Endothelial cell of umbilical vein (primary cell): ENCODE measurements at regions of chr5 and their contacts with region 1.

Region 1: DNA sequence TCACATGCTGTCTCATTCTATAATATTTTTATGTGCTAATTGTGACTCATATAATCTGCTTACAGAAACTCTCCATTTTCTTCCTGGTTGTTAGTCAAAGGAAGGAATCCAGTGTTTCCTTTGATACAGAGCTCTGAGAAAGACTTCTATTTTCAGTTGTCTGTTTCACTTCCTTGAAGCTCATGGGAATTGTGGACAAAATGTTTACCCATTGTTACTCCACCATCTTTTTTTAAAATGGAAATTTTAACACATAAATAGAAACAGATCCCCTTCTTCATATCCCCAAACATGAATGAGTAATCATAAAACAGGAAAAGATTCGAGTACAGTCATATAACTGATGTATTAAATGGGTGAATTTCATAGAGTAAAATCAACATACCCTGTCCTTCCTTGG is 42.0 kb upstream of the KCNN2 start:
- DNase-seq: peak; percentile 94
- H3K4me3 ChIP-seq: no peak overlapping the region
- H3K27ac ChIP-seq: peak overlapping the region; percentile 93
- H3K4me1 ChIP-seq: peaks cover 32% of the 10 kb centered on the region
- H3K27me3 ChIP-seq: no peaks in the 10 kb centered on the region
- CTCF ChIP-seq: no peak
- POLR2A ChIP-seq: no peak

Region 2: DNA sequence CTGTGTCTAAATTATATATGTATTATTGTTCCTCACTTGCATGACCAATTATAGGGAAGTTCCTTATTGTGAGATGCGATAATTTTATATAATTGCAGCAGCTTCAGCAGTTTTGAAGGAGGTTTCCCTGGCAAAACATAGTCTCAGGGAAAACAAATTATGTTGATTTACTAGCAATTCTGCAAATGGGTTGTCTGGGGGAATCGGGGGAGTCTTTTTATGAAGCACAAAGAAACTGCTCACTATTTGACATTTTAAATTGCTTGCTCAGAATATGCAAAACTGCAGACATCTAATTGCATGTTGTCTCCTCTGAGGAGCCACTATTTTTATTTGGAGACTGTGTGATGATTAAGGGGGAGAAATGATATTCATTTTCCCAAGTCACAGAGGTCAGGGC is 444.7 kb before region 1 on chr5:
- CTCF ChIA-PET with region 1: no interaction called
- POLR2A ChIA-PET with region 1: no interaction called
- dilution Hi-C with region 1: no loop called
- intact Hi-C with region 1: no loop called
- DNase-seq: no peak
- H3K4me3 ChIP-seq: no peak overlapping the region
- H3K27ac ChIP-seq: no peak overlapping the region
- H3K4me1 ChIP-seq: no peaks in the 10 kb centered on the region
- H3K27me3 ChIP-seq: no peaks in the 10 kb centered on the region
- CTCF ChIP-seq: no peak
- POLR2A ChIP-seq: no peak

Region 3: DNA sequence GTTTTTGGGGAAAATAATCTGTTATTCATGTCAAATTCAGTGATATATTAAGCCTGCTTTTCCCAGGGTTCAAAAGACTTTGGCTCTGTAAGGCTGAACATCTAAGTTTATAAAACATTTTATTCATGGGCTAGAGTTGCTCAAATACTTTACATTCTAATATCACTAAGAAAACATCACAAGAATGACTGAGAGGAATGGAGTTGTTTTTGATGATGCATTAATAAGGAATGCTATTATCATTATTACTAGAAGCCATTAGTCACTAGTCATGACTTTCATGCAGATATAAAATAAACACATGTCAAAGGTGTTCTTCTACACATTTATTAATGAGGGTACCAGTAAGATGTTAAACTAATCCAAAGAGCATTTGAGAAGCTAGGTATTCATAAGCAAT is 143.5 kb before region 1 on chr5:
- CTCF ChIA-PET with region 1: no interaction called
- POLR2A ChIA-PET with region 1: no interaction called
- dilution Hi-C with region 1: no loop called
- intact Hi-C with region 1: loop called (anchors 1 kb)
- DNase-seq: peak; percentile 56
- H3K4me3 ChIP-seq: no peak overlapping the region
- H3K27ac ChIP-seq: peak overlapping the region; percentile 84
- H3K4me1 ChIP-seq: peaks cover 23% of the 10 kb centered on the region
- H3K27me3 ChIP-seq: no peaks in the 10 kb centered on the region
- CTCF ChIP-seq: no peak
- POLR2A ChIP-seq: no peak

Region 4: GRCh38 chr5:114223866-114224265 is 96.0 kb before region 1 on chr5:
- CTCF ChIA-PET with region 1: no interaction called
- POLR2A ChIA-PET with region 1: no interaction called
- dilution Hi-C with region 1: no loop called
- intact Hi-C with region 1: no loop called
- DNase-seq: peak; percentile 53
- H3K4me3 ChIP-seq: no peak overlapping the region
- H3K27ac ChIP-seq: no peak overlapping the region
- H3K4me1 ChIP-seq: no peaks in the 10 kb centered on the region
- H3K27me3 ChIP-seq: no peaks in the 10 kb centered on the region
- CTCF ChIP-seq: peak; percentile 41 to 53
- POLR2A ChIP-seq: no peak